ENCODE measurements at regions of chr4 and their contacts with region 1.

Region 1: GRCh38 chr4:67522851-67523671 is 22.2 kb downstream of the CENPC start:
- DNase-seq: peak in 1 of 9 donors; percentile 35
- ATAC-seq: peak; percentile 64
- H3K4me3 ChIP-seq: no peak overlapping the region
- H3K4me3 Mint-ChIP-seq: peak overlapping the region in 5 of 10 donors; percentile 12 to 57 (median 27)
- H3K27ac ChIP-seq: no peak overlapping the region
- H3K27ac Mint-ChIP-seq: peak overlapping the region in 7 of 9 donors; percentile 24 to 94 (median 48)
- H3K4me1 ChIP-seq: peaks cover 0 to 4% of the 10 kb centered on the region in 2 donors
- H3K4me1 Mint-ChIP-seq: peaks cover 46 to 82% (median 60%) of the 10 kb centered on the region in 7 donors
- H3K27me3 ChIP-seq: no peaks in the 10 kb centered on the region
- H3K27me3 Mint-ChIP-seq: no peaks in the 10 kb centered on the region

Region 2: DNA sequence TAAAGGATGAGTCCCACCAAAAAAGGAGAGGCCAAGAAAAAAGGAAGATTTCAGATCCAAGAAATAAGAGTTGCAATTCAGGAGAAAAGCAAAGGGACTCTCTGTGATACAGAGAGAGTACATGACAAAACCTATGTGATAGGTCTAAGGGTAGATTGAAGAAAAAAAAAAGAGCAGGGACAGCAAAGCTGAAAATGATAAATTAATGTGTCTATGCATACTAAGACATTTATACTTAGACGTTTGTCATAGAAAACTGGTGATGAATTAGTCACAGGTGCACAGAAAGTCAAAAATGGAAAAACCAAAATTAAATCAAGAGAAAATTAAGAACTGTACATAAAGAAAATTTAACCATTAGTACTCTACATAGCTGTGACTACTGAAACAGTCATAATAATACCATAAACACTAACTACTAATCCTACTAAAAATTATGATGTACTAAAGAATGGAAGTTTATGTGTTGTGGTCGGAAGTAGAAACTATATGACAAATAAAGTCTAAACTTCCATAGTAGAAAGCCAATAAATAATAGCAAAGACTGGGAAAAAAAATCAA is 12.3 kb after region 1 on chr4:
- CTCF ChIA-PET with region 1: no interaction called
- POLR2A ChIA-PET with region 1: no interaction called
- intact Hi-C with region 1: loop called in 1 of 2 experiments (anchors 2 kb)
- DNase-seq: no peak
- ATAC-seq: no peak
- H3K4me3 ChIP-seq: no peak overlapping the region
- H3K4me3 Mint-ChIP-seq: peak overlapping the region in 2 of 10 donors; percentile 13 to 23
- H3K27ac ChIP-seq: no peak overlapping the region
- H3K27ac Mint-ChIP-seq: peak overlapping the region in 2 of 9 donors; percentile 11 to 67
- H3K4me1 ChIP-seq: no peaks in the 10 kb centered on the region
- H3K4me1 Mint-ChIP-seq: peaks cover 20 to 60% (median 49%) of the 10 kb centered on the region in 7 donors
- H3K27me3 ChIP-seq: no peaks in the 10 kb centered on the region
- H3K27me3 Mint-ChIP-seq: no peaks in the 10 kb centered on the region

Measured in naive thymus-derived CD4-positive, alpha-beta T cell (primary cell).